Endothelial cell of umbilical vein (primary cell): ENCODE measurements at regions of chr22 and their contacts with region 1.

Region 1: GRCh38 chr22:30754971-30755756 is 60.5 kb downstream of the OSBP2 start:
- DNase-seq: peak; percentile 72
- H3K4me3 ChIP-seq: no peak overlapping the region
- H3K27ac ChIP-seq: no peak overlapping the region
- H3K4me1 ChIP-seq: no peaks in the 10 kb centered on the region
- H3K27me3 ChIP-seq: no peaks in the 10 kb centered on the region
- CTCF ChIP-seq: peak; percentile 81 to 82
- POLR2A ChIP-seq: no peak

Region 2: DNA sequence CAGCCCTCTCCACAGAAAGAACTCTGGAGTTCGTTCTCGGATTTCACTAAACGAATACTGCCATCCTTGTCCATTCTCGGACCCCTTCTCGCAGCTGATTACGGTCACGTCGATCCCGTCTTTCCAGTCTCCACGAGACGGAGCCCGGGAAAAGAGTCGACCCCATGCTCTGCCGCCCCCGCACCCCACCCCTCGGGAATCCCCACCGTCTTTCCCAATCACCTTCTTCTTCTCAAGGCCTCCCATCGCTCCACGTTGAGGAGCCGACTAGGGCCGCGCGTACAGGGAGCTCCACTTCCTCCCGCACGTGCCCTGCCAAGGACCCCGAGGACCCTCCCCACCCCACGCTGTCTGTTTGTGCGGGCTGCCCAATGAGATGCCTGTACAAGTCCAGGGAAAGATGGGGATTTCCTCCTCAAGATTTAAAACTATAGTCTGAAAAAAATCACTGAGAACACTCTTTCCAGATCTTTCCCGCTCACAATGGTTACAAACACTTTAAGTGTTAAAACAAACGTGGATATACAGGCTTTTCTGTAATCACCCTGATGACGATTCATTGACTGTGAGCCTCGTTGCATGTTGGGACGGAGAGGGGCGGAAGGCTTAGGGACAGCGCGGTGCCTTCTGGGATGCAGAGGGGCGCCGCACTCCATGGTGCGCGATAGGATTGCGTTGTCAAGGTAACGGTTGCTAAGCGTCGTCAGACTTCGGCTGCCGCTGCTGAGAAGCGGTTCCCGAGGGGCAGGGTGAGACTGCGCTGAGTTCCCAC is 163.4 kb before region 1 on chr22 and contains the start of gene PES1:
- CTCF ChIA-PET with region 1: interaction called, 20 read pairs
- POLR2A ChIA-PET with region 1: no interaction called
- dilution Hi-C with region 1: no loop called
- intact Hi-C with region 1: no loop called
- DNase-seq: peak; percentile 99
- H3K4me3 ChIP-seq: peak within 1 kb of the TSS; percentile 68 to 93 (median 72)
- H3K27ac ChIP-seq: peak within 1 kb of the TSS; percentile 95
- H3K4me1 ChIP-seq: peaks cover 10% of the 10 kb centered on the region
- H3K27me3 ChIP-seq: no peaks in the 10 kb centered on the region
- CTCF ChIP-seq: no peak
- POLR2A ChIP-seq: no peak
- total RNA-seq, gene PES1: 106 and 110 TPM in 2 replicates

Region 3: GRCh38 chr22:30634471-30635233 is 120.5 kb before region 1 on chr22:
- CTCF ChIA-PET with region 1: interaction called, 486 read pairs
- POLR2A ChIA-PET with region 1: interaction called, 9 read pairs
- dilution Hi-C with region 1: no loop called
- intact Hi-C with region 1: loop called (anchors 1 kb)
- DNase-seq: peak; percentile 91
- H3K4me3 ChIP-seq: peak overlapping the region; percentile 20 to 52 (median 51)
- H3K27ac ChIP-seq: peak overlapping the region; percentile 93
- H3K4me1 ChIP-seq: peaks cover 31% of the 10 kb centered on the region
- H3K27me3 ChIP-seq: no peaks in the 10 kb centered on the region
- CTCF ChIP-seq: peak; percentile 95 to 98
- POLR2A ChIP-seq: no peak

Region 4: GRCh38 chr22:30662040-30662439 is 93.1 kb before region 1 on chr22:
- CTCF ChIA-PET with region 1: interaction called, 47 read pairs
- POLR2A ChIA-PET with region 1: no interaction called
- dilution Hi-C with region 1: no loop called
- intact Hi-C with region 1: no loop called
- DNase-seq: no peak
- H3K4me3 ChIP-seq: no peak overlapping the region
- H3K27ac ChIP-seq: no peak overlapping the region
- H3K4me1 ChIP-seq: peaks cover 6% of the 10 kb centered on the region
- H3K27me3 ChIP-seq: no peaks in the 10 kb centered on the region
- CTCF ChIP-seq: no peak
- POLR2A ChIP-seq: no peak

Region 5: DNA sequence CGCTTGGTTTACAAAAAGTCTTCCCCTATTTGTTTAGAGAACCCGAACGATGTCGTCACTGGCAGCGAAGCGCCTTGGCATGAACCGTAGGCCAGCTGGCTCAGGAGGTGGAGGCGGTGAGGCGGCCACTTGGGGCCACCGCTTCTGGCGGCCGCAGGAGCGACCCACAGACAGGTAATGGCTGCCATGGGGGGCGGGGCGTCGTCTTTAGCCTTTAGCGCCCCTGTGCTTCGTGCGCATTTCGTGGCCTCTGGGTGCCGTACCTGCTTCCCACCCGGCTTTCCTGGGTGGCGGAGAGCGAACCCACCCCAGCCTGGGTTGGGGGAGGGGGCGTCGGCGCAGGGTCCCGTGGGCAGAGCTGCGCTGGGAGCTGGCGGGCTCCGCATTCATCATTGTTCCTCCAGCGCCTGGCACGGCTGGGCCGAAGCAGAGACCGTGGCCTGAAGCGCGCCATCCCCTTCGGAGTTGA is 61.0 kb before region 1 on chr22:
- CTCF ChIA-PET with region 1: interaction called, 41 read pairs
- POLR2A ChIA-PET with region 1: no interaction called
- dilution Hi-C with region 1: no loop called
- intact Hi-C with region 1: loop called (anchors 1 kb)
- DNase-seq: peak; percentile 57
- H3K4me3 ChIP-seq: peak overlapping the region; percentile 25 to 66 (median 51)
- H3K27ac ChIP-seq: peak overlapping the region; percentile 5
- H3K4me1 ChIP-seq: peaks cover 9% of the 10 kb centered on the region
- H3K27me3 ChIP-seq: no peaks in the 10 kb centered on the region
- CTCF ChIP-seq: peak in 1 of 2 donors; percentile 5
- POLR2A ChIP-seq: no peak

Region 6: GRCh38 chr22:30742291-30743256 is 12.6 kb before region 1 on chr22:
- CTCF ChIA-PET with region 1: interaction called, 52 read pairs
- POLR2A ChIA-PET with region 1: no interaction called
- dilution Hi-C with region 1: no loop called
- intact Hi-C with region 1: no loop called
- DNase-seq: no peak
- H3K4me3 ChIP-seq: no peak overlapping the region
- H3K27ac ChIP-seq: no peak overlapping the region
- H3K4me1 ChIP-seq: peaks cover 17% of the 10 kb centered on the region
- H3K27me3 ChIP-seq: no peaks in the 10 kb centered on the region
- CTCF ChIP-seq: no peak
- POLR2A ChIP-seq: no peak

Region 7: DNA sequence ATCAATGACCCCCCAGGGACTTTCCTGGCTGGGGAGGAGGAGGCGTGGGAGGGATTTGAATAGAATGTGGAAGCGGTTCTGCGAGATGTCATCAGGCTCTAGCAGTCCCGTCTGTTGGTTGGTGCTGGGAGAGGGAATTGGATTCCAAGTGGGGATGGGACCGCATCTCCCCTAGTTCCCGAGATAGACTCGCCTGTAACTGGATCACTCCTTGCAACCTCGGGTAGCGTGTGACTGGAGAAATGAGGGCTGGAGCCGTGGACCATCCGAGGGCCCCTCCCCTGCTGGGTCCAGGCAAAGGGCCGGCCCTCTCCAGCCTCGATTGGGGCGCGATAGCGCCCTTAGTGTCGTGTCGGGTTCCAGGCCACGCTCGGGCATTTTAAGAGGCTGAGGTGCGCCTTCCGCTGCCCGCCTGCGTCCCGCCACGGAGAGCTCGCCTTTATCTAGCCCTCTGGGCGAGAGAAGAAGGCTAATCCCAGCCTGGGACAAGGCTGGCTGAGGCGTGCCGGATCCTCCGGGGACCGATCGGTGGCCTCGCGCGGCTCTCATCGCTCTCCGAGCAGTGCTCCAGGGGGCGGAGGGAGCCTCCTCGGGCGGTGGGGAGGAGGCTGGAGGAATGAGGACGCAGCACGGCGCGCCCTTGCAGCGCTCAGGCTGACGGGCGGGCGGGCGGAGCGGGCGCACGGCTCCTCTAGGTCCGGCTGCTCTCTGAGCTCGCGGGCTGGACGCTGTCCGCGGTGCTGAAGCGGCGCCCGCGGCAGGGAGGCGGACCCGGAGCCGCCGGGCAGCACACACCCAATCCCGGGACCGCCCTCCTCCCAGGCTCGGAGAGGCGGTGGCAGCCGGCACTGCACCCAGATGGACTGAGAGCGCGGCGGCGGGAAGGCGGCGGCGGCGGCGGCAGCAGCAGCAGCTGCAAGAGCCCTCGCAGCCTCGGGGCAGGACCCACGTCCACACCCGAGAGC is 47.3 kb after region 1 on chr22:
- CTCF ChIA-PET with region 1: no interaction called
- POLR2A ChIA-PET with region 1: no interaction called
- dilution Hi-C with region 1: no loop called
- intact Hi-C with region 1: no loop called
- DNase-seq: peak; percentile 93
- H3K4me3 ChIP-seq: no peak overlapping the region
- H3K27ac ChIP-seq: no peak overlapping the region
- H3K4me1 ChIP-seq: peaks cover 12% of the 10 kb centered on the region
- H3K27me3 ChIP-seq: peaks cover 5 to 8% of the 10 kb centered on the region in 2 experiments
- CTCF ChIP-seq: peak in 1 of 2 donors; percentile 41
- POLR2A ChIP-seq: no peak